Common myeloid progenitor, CD34-positive (primary cell): ENCODE measurements at regions of chr17 and their contacts with region 1.

Region 1: DNA sequence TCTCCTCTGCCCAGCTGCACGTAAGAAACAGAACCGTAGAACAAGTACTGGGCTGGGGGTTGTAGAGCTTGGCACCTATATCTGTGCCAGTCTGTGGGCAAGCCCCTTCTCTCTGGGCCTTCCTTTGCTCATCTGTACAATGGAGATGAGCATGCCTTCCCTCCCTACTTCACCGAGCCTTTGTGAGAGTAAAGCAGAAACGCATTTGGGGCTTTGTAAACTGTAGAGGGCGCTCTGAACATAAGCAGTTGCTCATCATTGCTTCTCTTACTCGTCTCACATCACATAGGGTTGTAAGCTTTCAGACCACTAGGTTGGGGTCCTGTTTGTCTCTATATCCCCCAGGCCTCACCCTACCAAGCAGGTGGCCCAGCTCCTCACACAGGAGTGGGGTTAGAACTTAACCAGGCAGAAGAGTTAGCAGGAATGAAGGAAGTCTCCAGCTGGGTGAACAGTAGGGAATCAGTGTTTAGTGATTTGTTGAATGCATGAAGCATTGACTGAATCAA is 15.1 kb downstream of the SAMD14 start:
- DNase-seq: peak; percentile 72 to 85 (median 85)
- H3K4me3 ChIP-seq: no peak overlapping the region
- H3K27ac ChIP-seq: no peak overlapping the region
- H3K4me1 ChIP-seq: peaks cover 0 to 23% (median 17%) of the 10 kb centered on the region in 4 experiments
- H3K27me3 ChIP-seq: no peaks in the 10 kb centered on the region

Region 2: DNA sequence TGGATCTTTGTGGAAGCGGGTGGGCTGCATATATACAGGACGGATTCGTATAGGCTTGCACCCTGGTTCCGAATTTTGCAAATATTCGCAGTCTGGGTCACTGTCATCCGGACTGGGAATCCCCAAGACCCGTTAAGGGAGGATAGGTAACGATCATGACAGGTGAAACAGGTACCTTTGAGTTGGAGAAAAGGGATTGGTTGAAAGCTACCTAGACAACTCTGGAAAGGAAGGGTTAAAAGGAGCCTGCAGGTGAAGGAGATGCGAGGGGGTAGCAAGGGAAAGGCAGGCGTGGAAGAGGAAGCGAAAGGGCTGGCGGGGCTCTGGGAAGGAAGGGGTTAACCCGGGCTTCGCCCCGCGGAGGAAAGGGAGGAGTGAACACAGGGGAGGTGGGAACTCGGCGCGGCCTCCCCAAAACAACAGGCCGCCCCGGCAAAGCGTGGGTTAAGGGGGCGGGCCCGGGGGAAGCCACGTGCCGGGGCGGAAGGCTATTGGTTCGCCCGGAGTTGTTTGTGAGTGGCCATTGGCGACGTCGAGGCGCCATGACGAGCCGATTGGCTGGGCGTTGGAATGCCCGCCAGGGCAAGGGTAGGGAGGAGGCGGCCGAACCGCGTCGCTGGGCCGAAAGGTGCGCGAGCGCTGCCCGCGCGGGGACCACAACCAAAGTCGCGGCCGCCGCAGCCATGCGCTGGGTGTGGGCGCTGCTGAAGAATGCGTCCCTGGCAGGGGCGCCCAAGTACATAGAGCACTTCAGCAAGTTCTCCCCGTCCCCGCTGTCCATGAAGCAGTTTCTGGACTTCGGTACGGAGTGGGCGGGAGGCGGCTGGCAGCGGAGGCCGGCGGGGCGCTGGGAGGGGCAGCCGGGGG is 19.9 kb before region 1 on chr17 and contains the start of gene PDK2:
- CTCF ChIA-PET with region 1: interaction called, 134 read pairs
- POLR2A ChIA-PET with region 1: no interaction called
- DNase-seq: peak; percentile 97 to 99 (median 98)
- H3K4me3 ChIP-seq: peak within 1 kb of the TSS; percentile 77 to 97 (median 84)
- H3K27ac ChIP-seq: peak within 1 kb of the TSS; percentile 61 to 85
- H3K4me1 ChIP-seq: peaks cover 0 to 24% (median 19%) of the 10 kb centered on the region in 4 experiments
- H3K27me3 ChIP-seq: no peaks in the 10 kb centered on the region

Region 3: DNA sequence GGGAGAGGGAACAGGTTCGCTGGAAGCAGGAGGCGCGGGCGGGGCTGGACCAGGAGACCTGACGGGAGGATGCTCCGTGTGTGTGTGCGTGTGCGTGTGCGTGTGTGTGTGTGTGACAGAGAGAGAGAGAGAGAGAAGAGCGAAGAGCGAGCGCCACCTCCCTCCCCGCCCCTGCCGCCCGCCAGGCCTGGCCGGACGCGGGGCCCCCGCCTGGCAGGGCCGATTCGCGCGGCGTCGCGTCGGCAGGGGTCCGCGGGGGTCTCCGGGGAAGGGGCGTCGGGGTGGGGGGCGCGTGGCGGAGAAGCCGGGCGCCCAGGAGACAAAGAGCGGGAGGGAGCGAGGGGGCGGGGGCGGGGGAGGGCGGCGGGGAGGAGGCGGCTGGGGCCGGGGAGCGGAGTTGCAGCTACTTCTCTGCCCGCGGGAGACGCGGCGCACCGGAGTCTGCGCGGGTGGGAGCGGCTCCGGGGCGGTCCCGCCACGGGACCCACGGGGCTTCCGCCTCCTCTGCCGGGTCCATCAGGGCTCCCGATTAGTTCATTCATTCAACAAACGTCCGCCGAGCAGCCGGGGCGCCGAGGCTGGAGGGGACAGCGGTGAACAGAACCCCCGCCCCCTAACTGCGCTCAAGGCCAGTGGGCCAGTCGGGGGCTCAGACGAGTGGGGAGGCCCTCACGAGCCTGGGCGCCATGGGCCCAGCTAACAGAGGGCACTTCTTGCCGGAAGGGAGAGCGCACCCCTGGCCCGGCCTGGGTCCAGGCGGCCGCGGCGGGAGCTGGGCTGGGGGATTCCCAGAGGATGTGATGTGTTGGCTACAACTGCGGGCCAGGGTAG is 15.0 kb after region 1 on chr17 and contains the start of gene SAMD14:
- CTCF ChIA-PET with region 1: interaction called, 98 read pairs
- POLR2A ChIA-PET with region 1: interaction called, 3 read pairs
- DNase-seq: peak in 2 of 3 donors; percentile 77 to 78
- H3K4me3 ChIP-seq: peak within 1 kb of the TSS in 6 of 7 experiments; percentile 40 to 73 (median 56)
- H3K27ac ChIP-seq: no peak within 1 kb of the TSS
- H3K4me1 ChIP-seq: peaks cover 3 to 37% (median 36%) of the 10 kb centered on the region in 4 experiments
- H3K27me3 ChIP-seq: peaks cover 0 to 21% (median 8%) of the 10 kb centered on the region in 5 experiments

Region 4: DNA sequence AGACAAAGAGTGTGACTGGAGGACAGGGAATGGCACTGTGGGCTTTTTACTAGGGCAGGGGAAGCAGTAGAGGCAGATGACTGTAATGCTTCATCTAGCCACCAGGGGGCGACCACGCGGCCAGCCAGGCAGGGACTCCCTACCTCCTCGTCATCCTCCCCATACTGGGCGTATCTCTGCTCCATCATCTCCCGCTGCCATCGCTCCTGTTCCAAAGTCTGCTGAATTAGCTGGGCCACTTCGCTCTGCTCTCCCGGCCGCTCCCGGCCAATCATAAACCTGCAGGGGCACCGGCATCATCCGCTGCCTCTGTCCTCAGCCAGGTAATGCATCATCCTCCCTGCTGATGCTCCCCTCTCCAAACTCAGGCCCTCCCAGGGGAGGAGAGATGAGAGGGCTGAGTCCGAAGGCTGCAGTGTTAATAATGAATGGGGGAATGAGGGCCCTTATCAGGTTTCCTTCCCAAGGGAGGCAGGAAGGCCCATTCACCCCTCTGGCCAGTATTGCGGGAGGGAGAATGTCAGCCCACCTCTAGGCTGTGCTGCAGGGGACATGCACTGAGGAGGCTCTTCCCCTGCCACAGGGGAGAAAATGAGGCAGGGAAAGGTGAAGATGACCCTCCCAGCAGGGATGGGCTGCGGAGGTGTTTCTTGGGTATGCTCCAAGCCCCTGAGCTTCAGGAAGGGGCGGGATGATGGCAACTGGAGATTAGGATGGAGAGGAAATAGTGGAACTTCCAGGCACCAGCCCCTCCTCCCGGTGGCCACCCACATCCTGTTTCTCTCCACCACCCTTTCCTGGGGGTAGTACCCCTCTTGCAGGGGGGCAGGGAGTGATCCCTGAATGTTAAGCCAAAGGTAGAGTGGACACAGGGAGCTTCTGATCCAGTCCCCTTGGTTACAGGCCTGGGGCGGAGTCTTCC is 25.3 kb after region 1 on chr17:
- CTCF ChIA-PET with region 1: interaction called, 98 read pairs
- POLR2A ChIA-PET with region 1: no interaction called
- DNase-seq: peak; percentile 68 to 80 (median 79)
- H3K4me3 ChIP-seq: peak overlapping the region in 5 of 7 experiments; percentile 14 to 64 (median 35)
- H3K27ac ChIP-seq: no peak overlapping the region
- H3K4me1 ChIP-seq: peaks cover 3 to 51% (median 47%) of the 10 kb centered on the region in 4 experiments
- H3K27me3 ChIP-seq: no peaks in the 10 kb centered on the region

Region 5: GRCh38 chr17:50151041-50151936 is 36.4 kb after region 1 on chr17:
- CTCF ChIA-PET with region 1: interaction called, 12 read pairs
- POLR2A ChIA-PET with region 1: no interaction called
- DNase-seq: peak; percentile 90 to 95 (median 93)
- H3K4me3 ChIP-seq: peak overlapping the region; percentile 56 to 88 (median 82)
- H3K27ac ChIP-seq: peak overlapping the region in 1 of 2 experiments; percentile 79
- H3K4me1 ChIP-seq: peaks cover 6 to 80% (median 70%) of the 10 kb centered on the region in 4 experiments
- H3K27me3 ChIP-seq: no peaks in the 10 kb centered on the region

Region 6: GRCh38 chr17:50161023-50161910 is 46.4 kb after region 1 on chr17:
- CTCF ChIA-PET with region 1: interaction called, 98 read pairs
- POLR2A ChIA-PET with region 1: interaction called, 4 read pairs
- DNase-seq: peak; percentile 93 to 96 (median 95)
- H3K4me3 ChIP-seq: peak overlapping the region; percentile 16 to 87 (median 64)
- H3K27ac ChIP-seq: peak overlapping the region in 1 of 2 experiments; percentile 10
- H3K4me1 ChIP-seq: peaks cover 9 to 32% (median 26%) of the 10 kb centered on the region in 4 experiments
- H3K27me3 ChIP-seq: no peaks in the 10 kb centered on the region